ENCODE measurements at regions of chr1 and their contacts with region 1.

Region 1: DNA sequence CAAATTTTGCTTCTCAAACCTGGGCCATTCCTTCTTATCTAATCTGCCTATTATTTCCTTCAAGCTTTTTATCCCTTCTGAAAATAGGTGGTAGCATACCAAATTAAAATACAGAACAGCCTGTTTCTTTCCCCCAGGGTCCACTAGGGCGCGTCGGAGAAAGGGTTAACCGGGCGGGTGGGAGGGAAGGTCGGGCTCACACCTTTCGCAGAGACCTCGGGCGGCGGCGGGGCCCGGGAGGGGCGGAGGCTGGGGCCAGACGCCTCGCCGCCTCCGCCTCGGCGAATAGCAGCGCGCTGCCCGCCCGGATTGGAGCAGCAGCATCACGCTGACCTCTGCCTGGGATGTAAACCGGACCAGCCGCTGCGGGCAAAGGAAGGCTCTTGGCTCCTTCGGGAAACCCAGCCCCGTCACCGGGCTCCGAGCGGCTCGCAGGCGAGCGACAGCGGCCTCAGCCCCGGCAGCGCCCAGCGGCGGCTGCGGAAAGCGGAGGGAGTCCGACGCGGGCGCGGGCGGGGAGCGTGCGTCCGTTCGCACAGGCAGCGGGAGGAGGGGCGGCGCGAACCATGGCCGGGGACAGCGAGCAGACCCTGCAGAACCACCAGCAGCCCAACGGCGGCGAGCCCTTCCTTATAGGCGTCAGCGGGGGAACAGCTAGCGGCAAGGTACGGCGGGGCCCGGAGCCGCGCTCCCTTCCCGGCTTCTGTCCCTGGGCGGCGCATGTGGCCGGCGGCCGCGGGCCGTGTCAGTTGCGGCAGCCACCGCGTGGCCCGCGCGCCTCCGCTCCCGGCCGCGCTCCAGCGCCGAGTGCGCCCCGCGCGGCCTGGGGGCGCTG is at the start of gene UCK2:
- DNase-seq: peak; percentile 95
- H3K4me3 ChIP-seq: peak within 1 kb of the TSS; percentile 70 to 96
- H3K27ac ChIP-seq: peak within 1 kb of the TSS; percentile 70 to 89
- H3K4me1 ChIP-seq: peaks cover 6 to 11% of the 10 kb centered on the region in 2 experiments; a peak in 3 of 4 replicates
- H3K27me3 ChIP-seq: no peaks in the 10 kb centered on the region
- CTCF ChIP-seq: no peak
- EP300 ChIP-seq: 0 out of 4 replicates have a peak, but pooled peaks of 1 of the 2 experiments have one; percentile 11
- RAD21 ChIP-seq: no peak
- polyA plus RNA-seq, gene UCK2: 50.1 and 53.7 TPM in 2 replicates

Region 2: DNA sequence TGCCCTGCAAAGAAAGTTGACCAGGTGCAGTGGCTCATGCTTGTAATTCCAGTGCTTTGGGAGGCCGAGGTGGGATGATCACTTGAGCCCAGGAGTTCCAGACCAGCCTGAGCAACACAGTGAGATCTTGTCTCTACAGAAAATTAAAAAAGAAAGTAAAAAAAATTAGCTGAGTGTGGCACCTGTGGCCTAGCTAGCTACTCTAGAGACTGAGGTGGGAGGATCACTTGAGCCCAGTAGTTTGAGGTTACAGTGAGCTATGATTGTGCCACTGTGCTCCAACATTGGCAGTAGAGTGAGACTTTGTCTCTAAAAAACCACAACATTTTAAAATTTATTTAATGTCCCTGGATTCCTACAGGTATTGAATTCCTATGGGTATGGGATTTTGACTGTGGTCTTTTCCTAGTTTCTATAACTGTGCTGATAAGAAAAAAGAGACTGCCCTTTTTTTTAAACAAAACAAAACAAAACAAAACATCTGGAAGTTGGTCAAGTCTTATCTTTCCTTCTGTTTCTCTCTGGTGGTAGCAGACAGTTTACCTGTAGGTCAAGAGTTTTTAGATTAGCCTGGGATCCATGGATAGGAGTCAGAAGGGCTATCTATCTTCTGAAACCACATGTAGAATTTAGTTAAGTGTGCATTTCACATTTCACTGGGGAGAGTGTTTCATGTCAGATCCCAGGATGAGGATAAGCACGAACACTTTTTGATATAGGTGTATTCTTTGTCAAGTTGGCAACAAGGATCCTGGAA is 18.7 kb after region 1 on chr1:
- CTCF ChIA-PET with region 1: interaction called, 21 read pairs
- POLR2A ChIA-PET with region 1: interaction called, 6 read pairs
- DNase-seq: no peak
- H3K4me3 ChIP-seq: no peak overlapping the region
- H3K27ac ChIP-seq: no peak overlapping the region
- H3K4me1 ChIP-seq: peaks cover 11 to 23% of the 10 kb centered on the region in 2 experiments; a peak in 3 of 4 replicates
- H3K27me3 ChIP-seq: no peaks in the 10 kb centered on the region
- CTCF ChIP-seq: no peak
- EP300 ChIP-seq: no peak
- RAD21 ChIP-seq: no peak

Region 3: DNA sequence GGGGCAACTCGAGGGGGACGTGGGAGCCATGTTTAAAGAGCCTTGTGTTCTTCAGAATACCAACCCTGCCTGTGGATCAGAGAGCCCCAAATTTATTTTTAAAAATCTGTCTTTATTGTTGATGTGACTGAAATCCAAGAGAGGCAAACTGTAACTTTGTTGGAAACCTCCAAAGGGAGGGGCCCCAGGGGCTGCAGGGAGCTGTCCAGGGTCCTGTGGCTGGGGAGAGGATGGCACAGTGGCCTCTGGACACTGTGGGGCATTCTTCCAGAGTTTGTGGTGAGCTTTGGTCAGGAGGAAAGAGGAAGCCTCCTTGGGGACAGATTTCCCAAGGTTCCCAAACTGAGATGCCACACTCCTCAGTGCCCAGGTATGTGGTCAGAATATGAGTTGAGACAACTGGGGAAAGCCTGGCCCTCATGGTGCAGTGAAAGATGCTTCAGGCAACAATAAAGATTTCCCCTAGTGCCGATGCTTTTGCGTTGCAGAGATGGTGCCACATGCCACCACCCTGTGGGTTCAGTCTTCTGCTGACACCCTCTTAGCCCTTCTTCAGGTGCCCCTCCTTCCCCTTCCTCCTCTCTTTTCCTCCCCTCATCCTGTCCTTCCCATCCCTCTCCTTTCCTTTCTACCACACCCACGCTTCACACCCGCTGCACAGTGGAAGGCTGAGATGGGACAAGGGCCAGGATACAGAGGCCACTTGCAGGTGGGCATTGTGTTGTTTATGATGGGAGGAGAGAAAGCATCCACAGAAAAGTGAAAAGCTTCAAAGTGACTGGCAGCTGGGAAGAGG is 122.0 kb after region 1 on chr1:
- CTCF ChIA-PET with region 1: no interaction called
- POLR2A ChIA-PET with region 1: no interaction called
- DNase-seq: no peak
- H3K4me3 ChIP-seq: no peak overlapping the region
- H3K27ac ChIP-seq: no peak overlapping the region
- H3K4me1 ChIP-seq: no peaks in the 10 kb centered on the region
- H3K27me3 ChIP-seq: no peaks in the 10 kb centered on the region
- CTCF ChIP-seq: no peak
- EP300 ChIP-seq: no peak
- RAD21 ChIP-seq: no peak

Measured in SK-N-SH (cell line).